Stomach (tissue), 19 donors: ENCODE measurements at regions of chr1 and their contacts with region 1.

Region 1: DNA sequence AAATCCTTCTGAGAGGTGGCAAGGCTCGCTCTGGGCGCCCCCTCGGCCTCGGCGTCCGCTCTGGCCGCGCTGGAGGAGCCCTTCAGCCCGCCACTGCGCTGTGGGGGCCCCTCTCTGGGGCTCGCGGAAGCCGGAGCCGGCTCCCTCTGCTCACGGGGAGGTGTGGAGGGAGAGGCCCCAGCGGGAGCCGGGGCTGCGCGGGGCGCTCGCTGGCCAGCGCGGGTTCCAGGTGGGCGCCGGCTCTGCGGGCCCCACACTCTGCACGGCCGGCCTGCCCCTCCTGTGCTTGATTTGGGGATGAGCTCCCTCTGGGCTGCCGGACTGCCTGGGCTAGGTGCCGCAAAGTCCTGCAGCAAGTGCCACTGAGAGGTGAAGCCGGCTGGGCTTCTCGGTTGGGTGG is 1260.7 kb upstream of the PRMT6 start:
- DNase-seq: no peak
- H3K4me3 ChIP-seq: no peak overlapping the region
- H3K27ac ChIP-seq: no peak overlapping the region
- H3K4me1 ChIP-seq: no peaks in the 10 kb centered on the region
- H3K27me3 ChIP-seq: no peaks in the 10 kb centered on the region
- CTCF ChIP-seq: no peak
- EP300 ChIP-seq: no peak
- POLR2A ChIP-seq: no peak

Region 2: GRCh38 chr1:104780470-104781078 is 1015.2 kb before region 1 on chr1:
- intact Hi-C with region 1: loop called (anchors 5 kb)
- DNase-seq: peak in 1 of 2 donors; percentile 54
- H3K4me3 ChIP-seq: no peak overlapping the region
- H3K27ac ChIP-seq: no peak overlapping the region
- H3K4me1 ChIP-seq: no peaks in the 10 kb centered on the region
- H3K27me3 ChIP-seq: no peaks in the 10 kb centered on the region
- CTCF ChIP-seq: peak in 5 of 7 experiments; percentile 35 to 61 (median 57)
- EP300 ChIP-seq: no peak
- POLR2A ChIP-seq: no peak